ENCODE measurements at regions of chr2 and their contacts with region 1.

Region 1: DNA sequence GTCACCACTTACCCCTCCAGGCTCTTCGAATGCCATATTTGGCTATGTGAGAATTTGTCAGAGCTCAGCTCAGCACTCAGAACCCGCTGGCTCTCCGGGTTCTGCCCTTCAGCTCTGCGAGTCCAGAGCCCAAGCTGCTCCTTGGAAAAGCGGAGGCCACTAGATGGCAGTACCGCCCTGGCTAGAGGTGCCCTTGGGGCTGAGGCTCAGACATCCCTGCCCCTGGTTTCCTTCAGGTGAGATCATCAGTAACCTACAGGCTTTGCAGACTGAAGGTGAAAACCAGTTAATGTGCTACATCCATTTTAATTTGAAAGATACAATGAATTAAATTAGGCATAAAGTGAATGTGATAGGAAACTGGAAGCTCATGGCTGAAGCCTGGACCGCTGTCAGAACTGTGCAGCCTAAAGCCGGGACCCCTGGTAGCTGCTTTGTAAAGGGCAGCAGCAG is 285.6 kb downstream of the AGAP1 start:
- DNase-seq: peak; percentile 48 to 50
- H3K4me3 ChIP-seq: no peak overlapping the region
- H3K27ac ChIP-seq: no peak overlapping the region
- H3K4me1 ChIP-seq: no peaks in the 10 kb centered on the region
- H3K27me3 ChIP-seq: no peaks in the 10 kb centered on the region
- CTCF ChIP-seq: peak; percentile 50 to 63 (median 54)
- POLR2A ChIP-seq: no peak

Region 2: GRCh38 chr2:235605312-235606003 is 174.0 kb before region 1 on chr2:
- intact Hi-C with region 1: no loop called
- DNase-seq: peak; percentile 80 to 81
- H3K4me3 ChIP-seq: no peak overlapping the region
- H3K27ac ChIP-seq: no peak overlapping the region
- H3K4me1 ChIP-seq: peaks cover 0 to 4% of the 10 kb centered on the region in 2 donors
- H3K27me3 ChIP-seq: no peaks in the 10 kb centered on the region
- CTCF ChIP-seq: no peak
- POLR2A ChIP-seq: no peak

Region 3: DNA sequence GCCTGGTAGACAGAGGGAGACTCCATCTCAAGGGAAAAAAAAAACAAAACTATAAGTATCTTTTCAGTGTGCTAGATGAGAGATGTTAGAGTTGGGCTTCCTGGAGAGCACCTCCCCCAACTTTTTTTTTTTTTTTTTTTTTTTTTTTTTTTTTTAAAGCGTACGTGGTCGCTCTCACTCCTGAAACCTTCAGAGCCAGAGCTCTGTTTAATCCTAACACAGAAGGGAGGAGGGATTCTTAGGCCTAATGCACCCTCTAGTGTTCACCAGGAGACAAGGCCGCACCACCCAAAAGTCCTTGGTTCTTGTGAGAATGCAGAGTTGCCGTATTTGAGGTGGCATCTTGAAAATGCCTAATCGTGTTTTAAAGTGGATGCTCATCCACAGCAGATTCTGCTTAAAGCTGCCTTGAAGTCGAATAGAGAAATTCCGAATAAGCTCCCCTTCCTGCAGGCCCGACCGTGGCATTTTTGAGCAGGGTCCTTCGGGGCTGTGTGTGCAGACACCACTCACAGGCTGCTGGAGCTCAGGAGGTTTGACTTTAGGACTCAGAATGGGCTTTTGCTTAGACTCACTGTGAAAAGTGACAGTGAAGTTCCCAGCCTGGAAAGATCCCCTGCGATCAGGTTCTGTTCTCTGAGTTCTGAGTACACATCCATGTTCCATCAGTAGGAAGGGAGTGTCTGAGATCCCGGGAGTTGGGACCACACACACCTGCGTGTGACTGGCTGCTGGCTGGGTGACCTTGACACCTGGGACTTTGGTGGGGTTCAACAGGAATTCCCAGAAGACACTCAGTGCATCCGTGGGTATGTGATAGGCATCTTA is 33.0 kb before region 1 on chr2:
- intact Hi-C with region 1: no loop called
- DNase-seq: peak; percentile 65 to 77
- H3K4me3 ChIP-seq: no peak overlapping the region
- H3K27ac ChIP-seq: no peak overlapping the region
- H3K4me1 ChIP-seq: no peaks in the 10 kb centered on the region
- H3K27me3 ChIP-seq: no peaks in the 10 kb centered on the region
- CTCF ChIP-seq: peak; percentile 75 to 85 (median 84)
- POLR2A ChIP-seq: no peak

Region 4: GRCh38 chr2:235958221-235958931 is 178.9 kb after region 1 on chr2:
- intact Hi-C with region 1: no loop called
- DNase-seq: no peak
- H3K4me3 ChIP-seq: no peak overlapping the region
- H3K27ac ChIP-seq: no peak overlapping the region
- H3K4me1 ChIP-seq: no peaks in the 10 kb centered on the region
- H3K27me3 ChIP-seq: no peaks in the 10 kb centered on the region
- CTCF ChIP-seq: no peak
- POLR2A ChIP-seq: no peak

Region 5: DNA sequence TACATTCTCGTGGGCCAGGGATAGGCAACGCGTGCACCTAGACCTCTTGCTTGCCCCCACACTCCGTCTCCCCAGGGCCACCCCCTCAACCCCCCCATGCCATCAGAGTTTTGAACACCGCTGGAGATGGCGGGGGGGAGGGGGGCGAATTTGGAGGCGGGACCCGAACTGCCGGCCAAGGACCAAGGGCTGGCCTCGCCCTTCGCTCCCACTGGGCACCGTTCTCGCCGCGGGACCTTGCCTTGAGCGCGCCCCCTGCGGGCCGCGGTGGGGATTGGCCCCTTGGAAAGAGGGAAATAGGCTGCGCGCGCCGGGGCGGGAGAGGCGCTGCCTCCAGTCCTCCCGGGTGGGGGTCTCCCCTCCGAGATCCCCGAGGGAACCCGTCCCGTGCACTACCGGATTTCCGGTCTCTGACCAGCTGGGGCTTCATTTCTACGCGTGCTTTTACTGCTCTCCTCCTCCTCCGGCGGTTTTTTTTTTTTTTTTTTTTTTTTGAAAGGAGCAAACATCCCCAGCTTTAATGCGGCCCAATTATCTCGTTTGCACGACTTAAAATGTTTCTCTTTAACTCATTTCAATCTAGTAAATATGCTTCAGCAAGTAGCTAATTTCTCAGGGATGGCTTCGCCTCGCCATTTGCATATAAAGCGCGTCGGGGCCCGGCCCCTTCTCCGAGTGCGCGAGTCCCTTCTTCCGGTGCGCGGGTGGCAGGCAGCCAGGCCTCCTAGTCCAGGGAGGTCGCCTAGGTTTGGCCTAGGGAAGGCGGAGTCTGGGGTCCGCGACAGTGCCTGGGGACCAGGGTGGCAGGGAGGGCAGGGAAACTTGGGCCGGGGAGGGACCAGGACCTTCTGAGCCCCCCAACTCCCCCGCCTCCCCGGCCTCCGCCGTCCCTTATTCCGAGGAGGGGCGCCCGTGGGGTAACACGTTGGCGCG is 398.8 kb after region 1 on chr2:
- intact Hi-C with region 1: loop called (anchors 10 kb)
- DNase-seq: no peak
- H3K4me3 ChIP-seq: no peak overlapping the region
- H3K27ac ChIP-seq: no peak overlapping the region
- H3K4me1 ChIP-seq: peaks cover 0 to 4% of the 10 kb centered on the region in 2 donors
- H3K27me3 ChIP-seq: peaks cover 23 to 85% of the 10 kb centered on the region in 2 donors
- CTCF ChIP-seq: peak; percentile 35 to 55 (median 44)
- POLR2A ChIP-seq: no peak

Measured in uterus (tissue), 4 donors.